Dorsolateral prefrontal cortex (tissue), 120 donors: ENCODE measurements at regions of chr9 and their contacts with region 1.

Region 1: DNA sequence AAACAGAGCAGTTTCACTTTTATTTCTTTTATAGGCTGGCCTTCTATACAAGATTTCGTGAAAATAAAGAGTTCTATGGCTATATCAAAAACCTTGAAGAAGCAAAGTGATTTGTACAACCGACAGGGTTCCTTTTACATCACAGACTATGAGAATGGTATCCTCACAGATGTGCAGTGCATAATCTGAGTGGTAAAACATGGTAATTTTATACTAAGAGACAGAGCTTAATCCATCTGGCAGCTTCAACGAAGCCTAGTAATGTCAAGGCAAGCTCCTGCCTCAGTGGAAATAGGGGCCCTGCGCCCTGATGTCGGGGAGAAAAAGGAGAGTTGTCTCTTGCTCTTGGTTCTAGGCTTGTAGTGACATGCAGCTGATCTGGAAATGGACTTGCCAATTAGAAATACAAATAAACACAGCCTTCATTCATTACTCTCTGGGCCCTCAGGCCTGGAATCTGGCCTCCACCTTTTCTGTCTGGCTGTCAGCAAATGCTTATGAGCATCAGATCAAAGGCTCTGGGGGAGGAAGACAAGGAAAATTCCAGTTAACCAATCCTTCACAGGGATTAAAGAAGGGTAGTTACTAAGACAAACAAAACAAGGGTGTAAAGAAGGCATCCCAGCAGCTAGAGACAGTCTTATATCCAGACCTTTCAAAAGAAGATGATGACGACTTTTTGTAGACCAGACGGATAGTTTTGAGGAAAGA is 33.6 kb upstream of the TRIM32 start:
- DNase-seq: no peak
- H3K4me3 ChIP-seq: no peak overlapping the region
- H3K27ac ChIP-seq: peak overlapping the region in 2 of 59 donors; percentile 15 to 42
- H3K27me3 ChIP-seq: no peaks in the 10 kb centered on the region
- CTCF ChIP-seq: no peak

Region 2: DNA sequence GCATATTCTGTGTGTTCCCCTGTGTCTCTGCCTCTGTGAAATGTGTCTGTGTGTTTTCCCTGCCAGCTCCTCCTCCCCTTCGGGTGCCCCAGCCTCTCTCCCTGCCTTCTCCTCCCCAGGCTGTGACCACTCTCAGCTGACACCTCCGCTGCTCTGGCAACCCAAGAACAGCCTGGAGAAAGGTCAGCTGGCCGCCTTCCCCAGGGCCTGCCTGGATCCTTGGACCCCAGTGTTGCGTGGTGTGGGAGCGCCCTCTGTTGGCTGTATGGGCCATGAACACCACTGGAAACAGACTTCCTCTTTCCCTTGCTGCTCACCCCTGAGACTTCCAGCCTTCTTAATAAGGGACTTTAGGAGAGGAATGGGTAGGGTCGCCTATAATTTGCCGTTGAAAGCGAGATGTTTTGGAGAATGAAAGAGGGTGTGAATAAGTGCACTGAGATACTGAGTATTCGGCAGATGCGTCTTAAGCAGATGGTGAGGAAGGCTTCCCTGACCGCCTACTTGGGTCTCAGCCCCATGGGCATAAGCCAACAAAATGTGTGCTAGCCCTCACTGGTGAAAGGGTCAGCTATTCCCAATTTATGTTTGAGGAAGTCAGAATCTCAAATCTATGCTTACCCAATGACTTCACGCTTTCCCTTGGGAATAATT is 81.3 kb before region 1 on chr9:
- intact Hi-C with region 1: loop called in 1 of 2 experiments (anchors 5 kb)
- DNase-seq: peak; percentile 61 to 81 (median 72)
- H3K4me3 ChIP-seq: no peak overlapping the region
- H3K27ac ChIP-seq: no peak overlapping the region
- H3K27me3 ChIP-seq: no peaks in the 10 kb centered on the region
- CTCF ChIP-seq: peak; percentile 55 to 94 (median 83)